ENCODE measurements at regions of chr2 and their contacts with region 1.

Region 1: DNA sequence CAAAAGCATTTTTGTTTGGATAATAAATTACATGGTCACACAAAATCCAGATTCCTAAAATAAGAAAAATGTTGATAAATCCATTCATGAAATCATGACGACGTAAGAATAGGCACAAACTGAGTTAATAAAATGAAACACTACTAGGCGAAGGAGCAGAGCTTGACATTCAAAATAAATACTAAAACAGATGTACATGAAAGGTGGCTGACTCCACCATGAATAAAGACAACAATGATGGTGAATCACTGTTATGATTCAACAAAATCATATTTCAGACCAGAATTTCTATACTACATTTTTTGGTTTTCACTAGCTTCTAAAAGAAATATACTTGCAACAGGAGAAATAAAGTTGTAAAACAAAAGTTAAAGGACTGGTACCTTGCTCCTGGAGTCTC is 122.0 kb upstream of the RNU4ATAC start:
- DNase-seq: no peak
- H3K4me3 ChIP-seq: no peak overlapping the region
- H3K27ac ChIP-seq: no peak overlapping the region
- H3K4me1 ChIP-seq: no peaks in the 10 kb centered on the region
- H3K27me3 ChIP-seq: no peaks in the 10 kb centered on the region
- CTCF ChIP-seq: no peak

Region 2: DNA sequence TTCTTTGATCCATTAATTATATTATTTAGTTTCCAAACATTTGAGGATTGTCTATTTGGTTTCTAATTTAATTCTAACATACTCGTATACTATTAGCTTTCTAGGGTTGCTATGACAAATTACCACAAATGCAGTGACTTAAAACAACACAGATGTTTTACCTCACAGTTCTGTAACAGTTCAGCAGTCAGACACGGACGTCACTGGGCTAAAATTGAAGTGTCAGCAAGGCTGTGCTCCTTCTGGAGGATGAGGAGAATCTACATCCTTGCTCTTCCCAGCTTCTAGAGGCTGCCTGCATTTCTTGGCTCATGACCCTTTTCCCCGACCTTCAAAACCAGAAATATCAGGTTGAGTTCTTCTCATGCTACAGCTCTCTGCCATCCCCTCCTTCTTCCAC is 241.2 kb before region 1 on chr2:
- intact Hi-C with region 1: no loop called
- DNase-seq: no peak
- H3K4me3 ChIP-seq: no peak overlapping the region
- H3K27ac ChIP-seq: no peak overlapping the region
- H3K4me1 ChIP-seq: no peaks in the 10 kb centered on the region
- H3K27me3 ChIP-seq: peaks cover 0 to 6% of the 10 kb centered on the region in 2 donors
- CTCF ChIP-seq: no peak

Region 3: GRCh38 chr2:121519732-121520640 is 111.3 kb after region 1 on chr2:
- intact Hi-C with region 1: no loop called
- DNase-seq: no peak
- H3K4me3 ChIP-seq: no peak overlapping the region
- H3K27ac ChIP-seq: no peak overlapping the region
- H3K4me1 ChIP-seq: peaks cover 0 to 11% (median 4%) of the 10 kb centered on the region in 4 donors
- H3K27me3 ChIP-seq: no peaks in the 10 kb centered on the region
- CTCF ChIP-seq: no peak

Region 4: DNA sequence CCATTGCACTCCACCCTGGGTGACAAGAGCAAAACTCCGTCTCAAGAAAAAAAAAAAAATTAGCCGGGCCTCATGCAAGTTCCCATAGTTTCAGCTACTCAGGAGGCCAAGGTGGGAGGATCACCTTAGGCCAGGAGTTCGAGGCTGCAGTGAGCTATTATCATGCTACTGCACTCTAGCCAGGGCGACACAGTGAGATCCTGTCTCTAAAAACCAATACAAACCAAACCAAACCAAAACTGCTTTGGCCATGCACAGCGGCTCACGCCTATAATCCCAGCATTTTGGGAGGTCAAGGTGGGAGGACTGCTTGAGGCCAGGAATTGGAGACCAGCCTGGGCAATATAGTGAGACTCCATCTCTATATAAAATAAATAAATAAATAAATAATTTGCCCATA is 308.9 kb after region 1 on chr2:
- intact Hi-C with region 1: loop called (anchors 5 kb)
- DNase-seq: peak in 1 of 2 donors; percentile 31
- H3K4me3 ChIP-seq: no peak overlapping the region
- H3K27ac ChIP-seq: no peak overlapping the region
- H3K4me1 ChIP-seq: peaks cover 0 to 12% (median 2%) of the 10 kb centered on the region in 4 donors
- H3K27me3 ChIP-seq: no peaks in the 10 kb centered on the region
- CTCF ChIP-seq: no peak

Measured in tibial artery (tissue), 4 donors.